Activated CD4-positive, alpha-beta memory T cell treated with anti-CD3 and anti-CD28 coated beads for 36 hours (primary cell): ENCODE measurements at regions of chr9 and their contacts with region 1.

Region 1: DNA sequence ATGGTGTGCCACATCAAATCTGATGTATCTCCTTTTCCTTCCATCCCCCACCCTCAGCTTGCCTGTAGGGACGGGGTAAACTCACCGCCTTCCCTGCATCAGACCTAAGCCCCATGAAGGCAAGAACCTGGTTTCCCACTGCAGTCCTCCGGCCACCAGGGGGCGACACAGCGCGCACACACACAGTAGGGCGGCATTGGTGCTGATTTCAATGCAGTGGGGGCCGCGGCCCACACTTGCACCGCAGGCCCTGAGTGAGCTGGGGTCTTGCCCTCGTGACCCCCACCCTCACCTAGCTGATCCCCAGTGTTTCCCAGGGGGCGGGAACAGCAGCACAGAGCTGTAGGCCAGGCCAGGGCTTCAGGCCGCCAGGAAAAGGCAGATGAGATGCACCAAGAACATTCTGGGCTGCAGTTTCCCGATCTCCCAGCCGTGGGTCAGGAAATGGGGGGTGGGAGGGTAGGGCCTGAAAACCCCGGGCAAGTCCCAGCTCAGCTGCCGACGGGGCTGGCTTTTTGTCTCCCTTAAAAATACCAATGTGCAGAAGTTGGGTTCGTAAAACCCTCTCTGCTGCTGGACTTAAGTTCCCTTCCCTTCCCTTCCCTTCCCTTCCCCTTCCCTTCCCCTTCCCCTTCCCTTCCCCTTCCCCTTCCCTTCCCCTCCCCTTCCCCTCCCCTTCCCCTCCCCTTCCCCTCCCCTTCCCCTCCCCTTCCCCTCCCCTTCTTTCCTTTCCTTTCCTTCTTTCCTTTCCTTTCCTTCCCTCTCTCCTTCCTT is 19.5 kb downstream of the FAM163B start:
- DNase-seq: peak; percentile 56
- H3K4me3 Mint-ChIP-seq: no peak overlapping the region
- H3K27ac Mint-ChIP-seq: no peak overlapping the region
- H3K4me1 Mint-ChIP-seq: no peaks in the 10 kb centered on the region
- H3K27me3 Mint-ChIP-seq: peaks cover 9% of the 10 kb centered on the region

Region 2: GRCh38 chr9:133429641-133430161 is 159.9 kb before region 1 on chr9:
- CTCF ChIA-PET with region 1: no interaction called
- POLR2A ChIA-PET with region 1: no interaction called
- intact Hi-C with region 1: no loop called
- DNase-seq: peak; percentile 30
- H3K4me3 Mint-ChIP-seq: no peak overlapping the region
- H3K27ac Mint-ChIP-seq: no peak overlapping the region
- H3K4me1 Mint-ChIP-seq: peaks cover 4% of the 10 kb centered on the region
- H3K27me3 Mint-ChIP-seq: peaks cover 28% of the 10 kb centered on the region

Region 3: DNA sequence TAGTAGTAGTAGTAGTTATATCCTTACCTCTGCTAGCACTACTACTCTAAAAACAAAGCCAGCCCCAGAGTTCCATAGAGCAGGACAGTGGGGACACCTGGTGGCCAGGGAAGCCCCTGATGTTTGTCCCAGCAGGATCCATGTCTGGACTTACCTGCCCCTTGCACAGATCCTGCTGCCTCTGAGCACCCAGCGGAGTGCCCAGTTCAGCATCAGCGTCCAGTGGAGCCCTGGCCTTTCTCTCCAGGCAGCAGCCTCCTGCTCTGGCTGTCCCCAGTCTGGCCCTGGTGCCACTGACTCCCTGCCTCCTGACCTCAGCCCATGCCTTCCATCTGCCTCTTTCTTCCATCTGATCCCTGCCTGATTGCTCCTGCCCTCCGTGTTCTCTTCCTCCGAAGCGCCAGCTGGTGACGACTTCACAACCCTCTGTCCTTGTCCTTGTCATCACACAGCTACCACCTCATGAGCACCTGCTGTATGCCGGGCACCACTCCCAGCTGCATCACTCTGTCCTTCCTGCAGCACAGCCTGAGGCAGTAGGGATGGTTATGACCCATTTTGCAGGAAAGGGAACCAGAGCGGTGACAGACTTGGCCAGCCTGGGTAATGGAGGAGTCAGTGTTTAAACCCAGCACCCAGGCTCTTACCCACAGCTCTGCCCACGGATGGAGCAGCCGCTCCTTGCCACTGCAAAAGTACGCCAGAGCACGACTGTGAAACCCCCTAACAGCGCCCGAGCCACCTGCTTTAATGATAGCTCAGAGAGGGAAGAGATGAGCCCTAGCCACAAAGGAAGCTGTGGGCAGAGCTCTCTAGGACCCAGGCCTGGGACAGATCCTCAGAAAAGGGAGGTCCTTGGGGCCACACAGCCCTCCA is 137.0 kb after region 1 on chr9:
- CTCF ChIA-PET with region 1: interaction called, 15 read pairs
- POLR2A ChIA-PET with region 1: no interaction called
- intact Hi-C with region 1: loop called (anchors 1 kb)
- DNase-seq: peak; percentile 75
- H3K4me3 Mint-ChIP-seq: no peak overlapping the region
- H3K27ac Mint-ChIP-seq: no peak overlapping the region
- H3K4me1 Mint-ChIP-seq: peaks cover 6% of the 10 kb centered on the region
- H3K27me3 Mint-ChIP-seq: peaks cover 8% of the 10 kb centered on the region

Region 4: DNA sequence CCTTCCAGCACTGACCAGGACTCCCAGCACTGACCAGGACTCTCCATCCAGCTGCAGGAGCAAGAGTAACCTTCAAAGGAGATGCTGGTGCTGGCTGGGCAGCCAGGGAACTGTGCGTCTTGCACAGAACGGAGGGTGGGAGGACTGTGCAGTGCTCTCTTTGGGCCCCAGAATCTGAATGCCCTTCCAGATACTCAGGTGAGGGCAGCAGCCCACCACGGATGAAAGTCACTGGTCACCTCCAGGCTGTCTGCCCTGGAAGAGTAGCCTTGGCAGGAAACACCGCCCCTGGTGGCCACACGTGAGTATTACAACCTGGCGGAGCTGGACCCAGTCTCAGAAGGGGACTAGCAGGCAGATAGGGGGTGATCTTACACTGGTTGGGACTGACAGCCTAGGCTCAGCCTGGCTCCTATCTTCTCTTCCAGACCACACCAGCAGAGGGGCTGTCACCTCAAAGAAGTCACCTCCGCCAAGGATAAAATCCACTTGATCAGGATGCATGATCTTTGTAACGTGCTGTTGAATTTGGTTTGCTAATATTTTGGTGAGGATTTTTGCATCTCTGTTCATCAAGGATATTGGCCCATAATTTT is 153.3 kb after region 1 on chr9:
- CTCF ChIA-PET with region 1: interaction called, 16 read pairs
- POLR2A ChIA-PET with region 1: no interaction called
- intact Hi-C with region 1: no loop called
- DNase-seq: peak; percentile 81
- H3K4me3 Mint-ChIP-seq: no peak overlapping the region
- H3K27ac Mint-ChIP-seq: no peak overlapping the region
- H3K4me1 Mint-ChIP-seq: peaks cover 2% of the 10 kb centered on the region
- H3K27me3 Mint-ChIP-seq: peaks cover 7% of the 10 kb centered on the region

Region 5: DNA sequence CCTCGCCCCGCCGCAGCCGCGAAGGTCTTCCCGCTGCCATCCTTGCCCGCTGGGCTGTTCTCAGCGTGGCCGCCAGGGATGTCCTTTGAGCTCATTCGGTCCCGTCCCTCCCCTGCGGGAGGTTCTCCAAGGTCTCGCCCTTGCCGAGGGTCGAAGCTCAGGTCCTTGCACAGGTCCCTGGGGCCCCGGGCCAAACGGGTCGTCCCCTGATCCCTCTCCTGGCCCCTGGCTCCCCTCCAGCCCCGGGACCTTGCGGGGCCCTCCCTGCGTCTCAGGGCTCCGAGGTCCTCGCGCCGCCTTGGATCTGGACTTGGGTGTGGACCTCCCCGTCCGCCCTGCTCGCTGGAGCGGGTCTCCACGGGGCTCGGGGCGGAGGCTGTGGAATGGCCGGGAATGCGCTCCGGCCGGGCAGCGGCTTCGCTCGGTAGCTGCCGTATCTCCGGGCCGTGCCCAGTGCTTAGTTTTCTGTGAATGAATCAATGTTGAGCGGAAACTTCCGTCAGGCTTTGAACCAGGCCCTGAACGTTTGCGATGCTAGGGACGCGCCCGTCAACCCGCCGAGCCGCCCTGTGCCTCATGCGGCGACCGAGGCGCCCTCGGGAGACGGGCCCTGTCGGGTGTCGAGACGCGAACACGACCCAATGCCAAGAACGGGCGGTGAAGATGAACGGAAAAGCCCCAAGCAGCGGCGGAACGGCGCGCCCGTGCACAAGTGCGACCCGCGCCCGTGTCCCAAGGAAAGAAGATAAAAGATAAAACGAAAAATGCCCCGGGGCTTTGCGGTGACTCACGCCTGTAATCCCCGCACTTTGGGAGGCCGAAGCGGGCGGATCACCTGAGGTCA is 573.9 kb after region 1 on chr9:
- CTCF ChIA-PET with region 1: no interaction called
- POLR2A ChIA-PET with region 1: no interaction called
- intact Hi-C with region 1: no loop called
- DNase-seq: peak; percentile 78
- H3K4me3 Mint-ChIP-seq: no peak overlapping the region
- H3K27ac Mint-ChIP-seq: no peak overlapping the region
- H3K4me1 Mint-ChIP-seq: peaks cover 19% of the 10 kb centered on the region
- H3K27me3 Mint-ChIP-seq: no peaks in the 10 kb centered on the region